Activated CD8-positive, alpha-beta memory T cell treated with anti-CD3 and anti-CD28 coated beads, Interleukin-2, amount 10 ng/mL, durations not matched to agents 7 days and 5 days (primary cell): ENCODE measurements at regions of chr19 and their contacts with region 1.

Region 1: GRCh38 chr19:29610563-29611271 is 4.6 kb downstream of the POP4 start:
- DNase-seq: peak; percentile 93
- ATAC-seq: peak; percentile 76
- H3K4me3 Mint-ChIP-seq: no peak overlapping the region
- H3K27ac Mint-ChIP-seq: peak overlapping the region; percentile 81
- H3K4me1 Mint-ChIP-seq: peaks cover 35% of the 10 kb centered on the region
- H3K27me3 Mint-ChIP-seq: no peaks in the 10 kb centered on the region

Region 2: DNA sequence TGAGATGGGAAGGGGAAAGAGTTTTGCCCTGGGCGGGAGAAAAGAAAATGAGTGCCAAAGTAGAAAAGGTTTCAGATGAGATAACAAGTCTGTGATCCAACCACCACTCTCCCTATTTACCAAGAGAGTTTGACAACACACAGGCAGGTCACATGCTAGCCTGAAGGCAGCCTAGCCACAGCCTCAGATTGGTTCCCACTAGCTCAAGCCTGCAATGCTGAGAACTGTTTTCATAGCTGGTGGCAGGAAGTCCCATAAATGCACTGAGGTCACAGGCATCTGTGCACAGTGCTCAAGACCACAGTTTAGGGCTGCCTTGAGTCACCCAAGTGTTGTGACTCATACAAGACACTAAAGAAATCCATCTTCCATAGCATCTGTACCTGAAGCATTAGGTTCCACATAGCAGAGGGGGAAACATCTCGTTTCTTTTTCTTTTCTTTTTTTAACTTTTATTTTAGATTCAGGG is 23.2 kb before region 1 on chr19:
- CTCF ChIA-PET with region 1: interaction called, 12 read pairs
- DNase-seq: peak; percentile 96
- ATAC-seq: peak; percentile 99
- H3K4me3 Mint-ChIP-seq: peak overlapping the region; percentile 12
- H3K27ac Mint-ChIP-seq: peak overlapping the region; percentile 85
- H3K4me1 Mint-ChIP-seq: peaks cover 46% of the 10 kb centered on the region
- H3K27me3 Mint-ChIP-seq: peaks cover 35% of the 10 kb centered on the region

Region 3: DNA sequence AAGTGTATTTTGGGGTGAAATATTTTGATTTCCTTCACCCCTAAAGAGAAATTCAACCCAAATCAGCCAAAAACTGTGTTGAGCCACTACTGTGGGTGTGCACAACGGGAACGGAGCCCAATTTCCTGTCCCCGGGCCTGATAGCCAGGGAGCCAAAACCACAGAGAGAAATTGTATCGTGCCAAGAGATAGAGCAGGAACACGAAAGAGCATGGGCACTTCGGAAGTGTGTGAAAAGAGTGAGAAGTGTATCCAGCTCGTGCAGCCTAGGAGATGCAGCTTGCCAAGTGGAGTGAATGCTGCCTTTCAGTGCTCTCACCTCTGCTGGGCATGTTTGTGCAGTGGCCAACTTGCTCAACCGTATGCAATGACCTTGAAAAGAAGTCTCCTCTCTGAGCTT is 35.2 kb after region 1 on chr19:
- CTCF ChIA-PET with region 1: interaction called, 11 read pairs
- DNase-seq: no peak
- ATAC-seq: peak; percentile 47
- H3K4me3 Mint-ChIP-seq: peak overlapping the region; percentile 6
- H3K27ac Mint-ChIP-seq: peak overlapping the region; percentile 56
- H3K4me1 Mint-ChIP-seq: peaks cover 13% of the 10 kb centered on the region
- H3K27me3 Mint-ChIP-seq: peaks cover 24% of the 10 kb centered on the region

Region 4: DNA sequence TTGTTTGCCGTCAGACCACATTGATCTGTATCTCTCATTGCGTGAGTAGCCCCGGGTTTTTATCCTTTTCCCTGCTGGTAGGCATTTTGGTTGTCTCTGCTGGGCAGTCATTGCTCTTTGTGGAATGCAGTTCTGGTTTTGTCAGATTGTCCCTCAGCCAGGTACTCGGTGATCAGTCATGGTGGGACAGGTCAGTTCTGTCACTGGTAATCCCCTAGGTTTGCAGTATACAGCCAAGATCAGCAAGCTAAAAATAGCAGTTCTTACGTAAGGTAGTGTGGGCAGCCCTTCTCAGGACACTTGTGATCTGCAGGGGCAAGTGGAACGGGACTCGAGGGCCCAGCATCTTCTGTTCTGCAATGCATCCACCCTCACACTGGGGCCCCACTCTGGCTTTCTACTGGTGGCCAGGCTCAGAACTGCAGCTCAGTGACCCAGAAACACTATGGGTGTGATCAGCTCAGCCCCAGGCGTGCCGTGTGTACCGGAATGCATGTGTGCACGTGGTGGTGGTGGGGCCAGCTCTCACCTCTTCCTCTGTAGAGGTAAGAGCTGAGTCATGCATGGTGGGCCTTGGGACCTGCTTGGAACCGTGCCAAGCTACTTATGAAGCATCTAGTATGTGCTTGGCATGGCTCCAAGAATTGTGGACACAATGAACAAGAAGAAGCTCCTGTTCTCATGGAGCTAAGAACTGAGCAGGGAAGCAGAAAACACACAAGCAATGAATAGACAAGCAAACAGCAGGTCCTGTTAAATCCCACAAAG is 60.9 kb after region 1 on chr19:
- CTCF ChIA-PET with region 1: interaction called, 74 read pairs
- DNase-seq: peak; percentile 98
- ATAC-seq: peak; percentile 77
- H3K4me3 Mint-ChIP-seq: peak overlapping the region; percentile 64
- H3K27ac Mint-ChIP-seq: peak overlapping the region; percentile 90
- H3K4me1 Mint-ChIP-seq: peaks cover 91% of the 10 kb centered on the region
- H3K27me3 Mint-ChIP-seq: no peaks in the 10 kb centered on the region

Region 5: DNA sequence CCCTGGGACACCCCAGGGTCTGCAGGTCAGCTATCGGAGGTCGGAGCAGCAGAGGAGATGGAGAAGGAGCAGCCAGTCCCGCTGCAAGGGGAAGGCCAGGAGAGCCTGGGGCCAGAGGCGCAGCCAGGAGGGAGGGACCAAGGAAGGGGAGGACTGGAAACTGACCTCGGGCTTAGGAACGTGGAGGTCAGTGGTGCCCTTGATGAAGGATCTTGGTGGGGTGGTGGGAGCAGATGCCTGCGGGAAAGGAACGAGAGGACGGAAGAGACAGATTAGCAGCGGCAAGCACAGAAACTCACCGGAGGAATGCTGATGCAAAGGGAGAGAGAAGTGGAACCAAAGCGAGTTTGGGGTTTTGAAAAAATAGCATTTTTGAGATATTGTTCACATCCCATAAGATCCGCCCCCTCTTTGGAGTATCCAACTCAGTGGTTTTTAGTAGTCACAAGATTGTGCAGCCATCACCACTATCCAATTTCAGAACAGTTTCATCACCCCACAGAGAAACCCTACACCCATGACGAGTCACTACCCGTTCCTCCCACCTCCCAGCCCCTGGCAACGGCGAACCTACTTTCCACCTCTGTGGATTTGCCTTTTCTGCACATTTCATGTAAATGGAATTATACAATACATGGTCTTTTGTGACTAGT is 76.7 kb after region 1 on chr19:
- CTCF ChIA-PET with region 1: interaction called, 171 read pairs
- DNase-seq: no peak
- ATAC-seq: no peak
- H3K4me3 Mint-ChIP-seq: no peak overlapping the region
- H3K27ac Mint-ChIP-seq: no peak overlapping the region
- H3K4me1 Mint-ChIP-seq: peaks cover 49% of the 10 kb centered on the region
- H3K27me3 Mint-ChIP-seq: no peaks in the 10 kb centered on the region

Region 6: DNA sequence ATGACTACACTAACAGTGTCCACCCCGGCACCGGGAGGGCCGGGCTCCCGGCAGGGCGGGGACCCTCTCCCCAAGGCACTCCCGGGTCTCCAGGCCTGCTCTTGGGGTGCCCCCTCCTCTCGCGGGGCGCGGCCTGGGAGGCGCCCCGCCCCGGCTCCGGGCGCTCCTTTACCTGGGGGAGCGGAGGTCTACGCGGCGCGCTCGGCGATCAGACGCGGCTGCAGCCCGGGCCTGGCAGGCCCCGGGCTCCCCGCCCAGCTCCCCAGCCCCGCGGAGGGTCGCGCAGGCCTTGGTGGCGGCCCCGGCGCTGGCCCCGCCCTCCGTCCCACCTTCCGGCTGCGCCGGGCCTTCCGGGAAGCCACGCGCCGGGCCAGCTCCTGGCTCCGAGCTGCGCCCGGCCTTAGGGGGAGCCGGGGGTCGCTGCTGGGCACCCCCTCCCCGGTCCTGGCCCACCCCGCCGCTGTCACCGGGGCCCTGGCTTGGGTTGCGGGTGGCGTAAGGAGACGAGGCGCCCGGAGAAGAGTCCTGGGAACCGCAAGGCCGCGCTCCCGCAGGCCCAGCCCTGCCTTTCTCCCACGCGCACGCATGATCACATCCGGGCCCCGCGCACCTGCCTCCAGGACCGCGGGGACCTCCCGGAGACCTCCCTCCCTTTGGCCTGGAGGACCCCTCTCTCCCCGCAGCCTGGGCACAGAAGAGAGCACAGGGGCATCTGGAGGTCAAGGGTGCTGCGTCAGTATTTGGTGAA is 104.4 kb after region 1 on chr19 and contains the start of gene C19orf12:
- CTCF ChIA-PET with region 1: interaction called, 162 read pairs
- DNase-seq: peak; percentile 80
- ATAC-seq: peak; percentile 69
- H3K4me3 Mint-ChIP-seq: peak within 1 kb of the TSS; percentile 96
- H3K27ac Mint-ChIP-seq: peak within 1 kb of the TSS; percentile 98
- H3K4me1 Mint-ChIP-seq: peaks cover 53% of the 10 kb centered on the region
- H3K27me3 Mint-ChIP-seq: no peaks in the 10 kb centered on the region
- total RNA-seq, gene C19orf12: 43.6 to 44.1 TPM